Mammary epithelial cell (primary cell): ENCODE measurements at regions of chr1 and their contacts with region 1.

Region 1: DNA sequence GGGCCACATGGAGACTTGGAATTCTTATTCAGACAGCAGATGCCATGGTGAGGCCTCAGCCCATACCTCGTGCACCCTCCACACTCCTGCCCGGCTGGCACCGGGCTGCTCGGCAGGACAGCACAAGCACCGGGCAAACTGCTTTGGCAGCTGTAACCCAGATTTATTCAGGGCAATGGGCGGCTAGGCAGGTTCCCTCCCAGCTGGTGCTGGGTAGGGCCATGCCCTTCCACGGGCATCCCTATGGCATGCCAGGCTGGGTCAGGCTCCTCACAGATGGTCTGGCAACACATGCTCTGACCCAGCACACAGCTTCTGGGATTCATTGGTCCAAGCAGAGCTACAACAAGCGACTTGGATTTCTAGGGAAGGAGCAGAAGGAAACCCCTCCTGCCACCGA is 53.4 kb downstream of the ATP1A1 start:
- DNase-seq: no peak
- H3K4me3 ChIP-seq: no peak overlapping the region
- H3K27ac ChIP-seq: no peak overlapping the region
- H3K4me1 ChIP-seq: no peaks in the 10 kb centered on the region
- H3K27me3 ChIP-seq: no peaks in the 10 kb centered on the region
- CTCF ChIP-seq: no peak

Region 2: GRCh38 chr1:116460261-116460660 is 33.9 kb after region 1 on chr1:
- CTCF ChIA-PET with region 1: no interaction called
- dilution Hi-C with region 1: loop called (anchors 5 kb)
- in situ Hi-C with region 1: no loop called
- intact Hi-C with region 1: no loop called
- DNase-seq: no peak
- H3K4me3 ChIP-seq: no peak overlapping the region
- H3K27ac ChIP-seq: no peak overlapping the region
- H3K4me1 ChIP-seq: no peaks in the 10 kb centered on the region
- H3K27me3 ChIP-seq: no peaks in the 10 kb centered on the region
- CTCF ChIP-seq: no peak